ENCODE measurements at regions of chr15 and their contacts with region 1.

Region 1: GRCh38 chr15:84600851-84601838 is at the start of gene ZSCAN2:
- DNase-seq: peak; percentile 87 to 94
- H3K4me3 ChIP-seq: peak within 1 kb of the TSS; percentile 88
- H3K27ac ChIP-seq: peak within 1 kb of the TSS; percentile 24; the same call in 1 of the 2 replicates
- H3K4me1 ChIP-seq: peaks cover 6% of the 10 kb centered on the region
- H3K27me3 ChIP-seq: no peaks in the 10 kb centered on the region
- CTCF ChIP-seq: no peak
- total RNA-seq, gene ZSCAN2: 9.7 and 11.3 TPM in 2 replicates

Region 2: GRCh38 chr15:84552896-84553295 is 48.2 kb before region 1 on chr15:
- CTCF ChIA-PET with region 1: no interaction called
- POLR2A ChIA-PET with region 1: no interaction called
- intact Hi-C with region 1: no loop called
- DNase-seq: no peak
- H3K4me3 ChIP-seq: no peak overlapping the region
- H3K27ac ChIP-seq: no peak overlapping the region
- H3K4me1 ChIP-seq: peaks cover 6% of the 10 kb centered on the region; the same call in 1 of the 2 replicates
- H3K27me3 ChIP-seq: no peaks in the 10 kb centered on the region
- CTCF ChIP-seq: no peak

Region 3: GRCh38 chr15:84575493-84575892 is 25.7 kb before region 1 on chr15:
- CTCF ChIA-PET with region 1: no interaction called
- POLR2A ChIA-PET with region 1: interaction called, 14 read pairs
- intact Hi-C with region 1: no loop called
- DNase-seq: no peak
- H3K4me3 ChIP-seq: no peak overlapping the region
- H3K27ac ChIP-seq: no peak overlapping the region
- H3K4me1 ChIP-seq: peaks cover 13% of the 10 kb centered on the region
- H3K27me3 ChIP-seq: no peaks in the 10 kb centered on the region
- CTCF ChIP-seq: no peak

Region 4: GRCh38 chr15:84633311-84634227 is 32.4 kb after region 1 on chr15:
- CTCF ChIA-PET with region 1: interaction called, 4 read pairs
- POLR2A ChIA-PET with region 1: no interaction called
- intact Hi-C with region 1: loop called (anchors 2 kb)
- DNase-seq: peak; percentile 46 to 63
- H3K4me3 ChIP-seq: peak overlapping the region; percentile 70
- H3K27ac ChIP-seq: no peak overlapping the region
- H3K4me1 ChIP-seq: peaks cover 33% of the 10 kb centered on the region
- H3K27me3 ChIP-seq: no peaks in the 10 kb centered on the region
- CTCF ChIP-seq: no peak

Region 5: DNA sequence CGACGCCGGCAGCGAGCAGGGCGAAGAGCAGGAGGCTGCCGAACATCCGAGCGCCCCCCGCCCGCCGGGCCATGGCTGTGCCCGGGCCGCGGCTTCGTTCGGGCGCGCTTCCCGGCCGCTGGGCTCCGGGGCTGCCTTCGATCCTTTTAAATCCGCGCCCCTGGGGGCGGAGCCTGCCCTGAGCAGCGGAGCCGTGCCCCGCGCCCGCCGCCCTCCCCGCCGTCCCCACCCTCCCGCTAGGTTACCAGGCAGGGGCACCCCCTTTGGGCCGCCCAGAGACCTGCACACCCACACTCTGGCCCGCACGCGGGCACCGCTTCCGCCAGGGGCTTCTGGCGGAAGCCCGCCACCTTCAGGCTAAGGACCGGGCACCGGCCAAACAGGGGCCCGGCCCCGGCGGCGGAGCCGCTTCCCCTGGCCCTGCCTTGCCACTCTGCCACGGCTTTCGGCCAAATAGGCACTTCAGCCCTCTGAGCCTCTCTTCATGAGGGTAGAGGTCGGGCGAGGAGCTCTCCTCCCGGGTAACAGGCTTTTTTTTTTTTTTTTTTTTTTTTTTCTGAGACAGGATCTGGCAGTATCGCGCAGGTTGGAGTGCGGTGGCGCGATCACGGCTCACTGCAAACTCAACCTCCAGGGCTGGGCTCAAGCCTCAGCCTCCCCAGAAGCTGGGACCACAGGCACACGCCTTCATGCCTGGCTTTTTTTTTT is 57.1 kb after region 1 on chr15 and contains the start of gene NMB:
- CTCF ChIA-PET with region 1: interaction called, 10 read pairs
- POLR2A ChIA-PET with region 1: no interaction called
- intact Hi-C with region 1: loop called (anchors 2 kb)
- DNase-seq: peak; percentile 70 to 88
- H3K4me3 ChIP-seq: peak within 1 kb of the TSS; percentile 70
- H3K27ac ChIP-seq: peak within 1 kb of the TSS; percentile 83
- H3K4me1 ChIP-seq: peaks cover 23% of the 10 kb centered on the region
- H3K27me3 ChIP-seq: no peaks in the 10 kb centered on the region
- CTCF ChIP-seq: peak; percentile 73
- total RNA-seq, gene NMB: 66.7 and 77.1 TPM in 2 replicates

Region 6: GRCh38 chr15:84818261-84819131 is 217.4 kb after region 1 on chr15:
- CTCF ChIA-PET with region 1: no interaction called
- POLR2A ChIA-PET with region 1: no interaction called
- intact Hi-C with region 1: no loop called
- DNase-seq: no peak
- H3K4me3 ChIP-seq: no peak overlapping the region
- H3K27ac ChIP-seq: no peak overlapping the region
- H3K4me1 ChIP-seq: peaks cover 12% of the 10 kb centered on the region
- H3K27me3 ChIP-seq: no peaks in the 10 kb centered on the region
- CTCF ChIP-seq: no peak